Uterus (tissue), 4 donors: ENCODE measurements at regions of chr2 and their contacts with region 1.

Region 1: DNA sequence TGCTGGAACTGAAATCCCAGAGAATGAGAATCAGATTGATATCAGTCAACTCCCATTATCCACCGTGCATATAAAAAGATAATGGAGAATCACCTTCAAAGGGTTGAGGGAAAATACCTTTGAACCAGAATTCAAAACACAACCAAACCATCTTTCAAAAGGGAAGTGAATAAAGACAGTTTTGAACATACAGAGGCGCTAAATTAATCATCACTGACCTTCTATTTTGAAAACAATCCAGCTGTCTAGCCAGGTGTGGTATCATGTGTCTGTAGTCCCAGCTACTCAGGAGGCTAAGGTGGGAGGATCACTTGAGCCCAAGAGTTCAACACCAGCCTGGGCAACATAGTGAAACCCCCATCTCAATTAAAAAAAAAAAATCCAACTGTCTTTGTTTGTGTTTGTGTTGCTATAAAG is 63.6 kb downstream of the TRABD2A start:
- DNase-seq: no peak
- H3K4me3 ChIP-seq: no peak overlapping the region
- H3K27ac ChIP-seq: no peak overlapping the region
- H3K4me1 ChIP-seq: no peaks in the 10 kb centered on the region
- H3K27me3 ChIP-seq: no peaks in the 10 kb centered on the region
- CTCF ChIP-seq: no peak
- POLR2A ChIP-seq: no peak

Region 2: GRCh38 chr2:84749442-84749841 is 67.8 kb before region 1 on chr2:
- intact Hi-C with region 1: no loop called
- DNase-seq: no peak
- H3K4me3 ChIP-seq: no peak overlapping the region
- H3K27ac ChIP-seq: no peak overlapping the region
- H3K4me1 ChIP-seq: no peaks in the 10 kb centered on the region
- H3K27me3 ChIP-seq: no peaks in the 10 kb centered on the region
- CTCF ChIP-seq: no peak
- POLR2A ChIP-seq: no peak

Region 3: DNA sequence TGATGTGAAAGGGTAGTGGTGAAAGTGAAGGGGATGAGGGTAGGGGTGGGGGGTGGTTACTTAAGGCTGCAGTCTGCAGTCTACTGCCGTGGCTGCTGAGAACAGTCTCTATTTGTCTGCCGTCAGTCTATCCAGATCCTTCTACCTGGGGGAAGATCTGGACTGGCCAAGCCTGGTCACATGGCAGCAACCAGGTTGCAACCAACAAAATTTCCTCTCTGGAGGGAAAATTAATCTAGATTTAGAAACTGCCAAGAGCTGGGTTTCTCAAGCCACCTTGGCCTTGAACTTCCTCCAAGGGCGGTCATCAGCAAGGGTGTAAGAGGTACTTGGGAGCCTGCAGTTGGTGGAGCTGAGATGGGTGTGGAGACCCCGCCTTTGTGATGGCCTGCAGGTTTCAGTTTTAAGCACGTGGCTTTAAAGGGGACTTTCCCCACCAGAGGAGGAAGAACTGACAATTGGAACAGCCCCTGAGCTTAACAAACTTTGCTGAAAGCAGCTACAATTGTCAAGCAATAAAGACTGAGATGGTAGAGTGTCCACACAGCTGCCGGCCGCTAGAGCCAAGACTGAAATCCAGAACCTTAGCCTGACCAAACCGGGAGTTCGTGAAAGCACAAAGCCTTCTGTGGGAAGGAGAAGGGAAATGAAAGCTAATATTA is 122.3 kb after region 1 on chr2:
- intact Hi-C with region 1: loop called (anchors 5 kb)
- DNase-seq: no peak
- H3K4me3 ChIP-seq: no peak overlapping the region
- H3K27ac ChIP-seq: no peak overlapping the region
- H3K4me1 ChIP-seq: no peaks in the 10 kb centered on the region
- H3K27me3 ChIP-seq: no peaks in the 10 kb centered on the region
- CTCF ChIP-seq: no peak
- POLR2A ChIP-seq: no peak